A673 (cell line): ENCODE measurements at regions of chr2 and their contacts with region 1.

Region 1: GRCh38 chr2:9984217-9984739 is 32.8 kb downstream of the GRHL1 start:
- DNase-seq: peak; percentile 71
- H3K4me3 ChIP-seq: no peak overlapping the region
- H3K27ac ChIP-seq: no peak overlapping the region
- H3K4me1 ChIP-seq: no peaks in the 10 kb centered on the region
- H3K27me3 ChIP-seq: no peaks in the 10 kb centered on the region
- CTCF ChIP-seq: peak; percentile 71

Region 2: DNA sequence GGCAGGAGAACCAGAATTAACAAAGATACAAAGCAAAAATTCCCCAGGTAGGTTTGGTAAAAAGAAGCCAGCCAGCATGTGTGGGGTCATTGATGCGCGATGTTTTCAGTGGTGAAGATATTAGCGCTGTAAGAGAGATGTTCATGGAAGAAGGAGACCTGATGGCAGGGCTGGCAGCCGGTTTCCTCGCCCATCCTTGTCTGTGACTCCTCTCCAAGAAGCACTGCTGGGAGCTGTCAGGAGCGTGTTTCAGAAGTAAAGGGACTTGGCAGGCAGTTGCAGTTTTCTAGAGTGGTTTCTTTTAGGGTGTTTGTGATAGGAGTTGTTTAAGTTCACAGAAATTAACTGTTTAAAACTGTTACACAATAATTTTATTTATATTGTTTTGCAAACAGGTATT is 116.4 kb before region 1 on chr2:
- CTCF ChIA-PET with region 1: no interaction called
- POLR2A ChIA-PET with region 1: no interaction called
- intact Hi-C with region 1: no loop called
- DNase-seq: no peak
- H3K4me3 ChIP-seq: no peak overlapping the region
- H3K27ac ChIP-seq: no peak overlapping the region
- H3K4me1 ChIP-seq: no peaks in the 10 kb centered on the region
- H3K27me3 ChIP-seq: no peaks in the 10 kb centered on the region
- CTCF ChIP-seq: no peak

Region 3: DNA sequence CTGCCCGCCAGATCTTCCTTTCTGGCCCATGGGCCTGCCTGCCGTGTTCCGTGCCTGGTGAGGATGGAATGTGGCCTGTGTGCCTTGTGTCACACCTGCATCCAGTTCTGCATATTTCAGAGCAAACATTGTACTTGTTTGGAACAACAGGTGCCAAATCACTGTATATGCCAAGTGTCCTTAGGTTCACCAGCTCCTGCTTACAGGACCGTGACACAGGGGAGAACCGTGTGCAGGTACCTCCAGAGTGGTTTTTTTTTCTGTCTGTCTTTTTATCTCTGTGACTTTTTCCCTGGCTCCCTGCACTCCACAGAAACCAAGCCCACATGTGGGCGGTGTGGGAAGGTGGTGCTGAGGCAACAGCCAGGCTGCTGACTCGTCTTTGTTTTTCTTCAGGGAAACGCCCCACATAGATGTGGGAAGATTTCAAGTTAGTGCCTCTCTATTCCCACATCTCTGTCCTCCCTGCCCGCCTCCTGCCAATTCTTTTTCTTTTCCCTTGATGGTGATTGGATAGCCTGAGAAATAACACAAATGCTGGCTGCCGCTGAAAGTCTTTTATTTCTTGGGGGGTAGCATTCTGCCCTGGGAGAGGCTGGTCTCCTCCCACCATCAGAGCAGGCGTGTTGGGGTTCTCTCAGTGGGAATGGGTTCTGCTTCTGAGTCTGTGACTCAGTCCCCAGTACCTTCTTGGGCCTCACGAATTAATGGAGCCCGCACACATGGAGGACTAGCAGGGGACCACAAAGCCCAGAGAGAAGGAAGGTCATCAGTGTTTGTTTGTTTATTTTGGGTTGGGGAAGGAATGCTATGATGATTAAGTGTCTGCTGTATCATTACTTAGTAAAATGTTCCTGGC is 11.4 kb before region 1 on chr2:
- CTCF ChIA-PET with region 1: interaction called, 12 read pairs
- POLR2A ChIA-PET with region 1: no interaction called
- intact Hi-C with region 1: no loop called
- DNase-seq: no peak
- H3K4me3 ChIP-seq: no peak overlapping the region
- H3K27ac ChIP-seq: no peak overlapping the region
- H3K4me1 ChIP-seq: no peaks in the 10 kb centered on the region
- H3K27me3 ChIP-seq: no peaks in the 10 kb centered on the region
- CTCF ChIP-seq: no peak

Region 4: GRCh38 chr2:10028988-10029874 is 45.0 kb after region 1 on chr2:
- CTCF ChIA-PET with region 1: interaction called, 12 read pairs
- POLR2A ChIA-PET with region 1: no interaction called
- intact Hi-C with region 1: no loop called
- DNase-seq: peak; percentile 54
- H3K4me3 ChIP-seq: no peak overlapping the region
- H3K27ac ChIP-seq: no peak overlapping the region
- H3K4me1 ChIP-seq: peaks cover 11% of the 10 kb centered on the region
- H3K27me3 ChIP-seq: no peaks in the 10 kb centered on the region
- CTCF ChIP-seq: no peak

Region 5: DNA sequence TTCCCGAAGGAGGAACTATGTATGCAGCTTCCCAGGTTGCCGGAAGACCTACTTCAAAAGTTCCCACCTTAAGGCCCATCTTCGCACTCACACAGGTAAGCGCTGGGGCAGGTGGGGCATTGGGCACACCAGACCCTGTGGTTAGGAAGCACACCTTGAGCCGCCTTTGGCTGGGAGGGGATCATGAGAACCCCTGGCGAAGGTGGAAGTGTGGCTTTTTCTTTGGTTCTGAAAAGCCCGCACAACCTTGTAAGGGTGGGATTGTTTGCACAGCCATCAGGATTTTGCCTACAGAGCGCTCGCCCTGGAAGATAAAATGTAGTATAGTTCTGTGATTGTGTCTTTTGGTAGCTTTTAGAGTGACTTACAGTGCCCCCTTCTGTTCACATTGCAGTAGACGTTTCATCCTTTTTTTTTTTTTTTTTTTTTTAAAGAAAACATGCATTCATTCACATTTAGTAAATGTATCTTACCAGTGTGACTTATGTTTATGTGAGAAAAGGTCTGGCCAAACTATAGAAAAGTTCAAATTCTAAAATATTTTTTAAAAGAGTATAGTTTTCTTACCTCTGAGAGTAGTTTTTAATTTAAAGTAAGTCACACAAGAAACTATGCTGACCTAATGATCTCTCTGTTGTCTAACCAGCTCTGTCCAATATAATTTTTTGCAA is 64.4 kb after region 1 on chr2:
- CTCF ChIA-PET with region 1: interaction called, 40 read pairs
- POLR2A ChIA-PET with region 1: interaction called, 5 read pairs
- intact Hi-C with region 1: loop called (anchors 5 kb)
- DNase-seq: peak; percentile 75
- H3K4me3 ChIP-seq: no peak overlapping the region
- H3K27ac ChIP-seq: no peak overlapping the region
- H3K4me1 ChIP-seq: no peaks in the 10 kb centered on the region
- H3K27me3 ChIP-seq: no peaks in the 10 kb centered on the region
- CTCF ChIP-seq: peak; percentile 82

Region 6: GRCh38 chr2:10072656-10073480 is 88.6 kb after region 1 on chr2:
- CTCF ChIA-PET with region 1: interaction called, 24 read pairs
- POLR2A ChIA-PET with region 1: no interaction called
- intact Hi-C with region 1: no loop called
- DNase-seq: peak; percentile 91
- H3K4me3 ChIP-seq: no peak overlapping the region
- H3K27ac ChIP-seq: no peak overlapping the region
- H3K4me1 ChIP-seq: no peaks in the 10 kb centered on the region
- H3K27me3 ChIP-seq: peaks cover 30% of the 10 kb centered on the region
- CTCF ChIP-seq: peak; percentile 87